ENCODE measurements at regions of chr9 and their contacts with region 1.

Region 1: GRCh38 chr9:93962561-93963440 is 7.6 kb upstream of the BARX1 start:
- DNase-seq: peak; percentile 64 to 83 (median 78)
- ATAC-seq: peak; percentile 90
- H3K4me3 ChIP-seq: no peak overlapping the region
- H3K4me3 Mint-ChIP-seq: peak overlapping the region in 6 of 10 donors; percentile 0 to 35 (median 2)
- H3K27ac ChIP-seq: no peak overlapping the region
- H3K27ac Mint-ChIP-seq: no peak overlapping the region
- H3K4me1 ChIP-seq: peaks cover 9 to 20% of the 10 kb centered on the region in 2 donors
- H3K4me1 Mint-ChIP-seq: peaks cover 26 to 44% (median 28%) of the 10 kb centered on the region in 7 donors
- H3K27me3 ChIP-seq: peaks cover 0 to 25% of the 10 kb centered on the region in 2 donors
- H3K27me3 Mint-ChIP-seq: peaks cover 45 to 67% (median 55%) of the 10 kb centered on the region in 5 donors

Region 2: GRCh38 chr9:92850884-92851283 is 1111.9 kb before region 1 on chr9:
- CTCF ChIA-PET with region 1: no interaction called
- POLR2A ChIA-PET with region 1: no interaction called
- intact Hi-C with region 1: loop called in 1 of 2 experiments (anchors 2 kb)
- DNase-seq: peak in 7 of 9 donors; percentile 22 to 46 (median 27)
- ATAC-seq: no peak
- H3K4me3 ChIP-seq: no peak overlapping the region
- H3K4me3 Mint-ChIP-seq: no peak overlapping the region
- H3K27ac ChIP-seq: no peak overlapping the region
- H3K27ac Mint-ChIP-seq: peak overlapping the region in 3 of 9 donors; percentile 8 to 84 (median 42)
- H3K4me1 ChIP-seq: peaks cover 0 to 4% of the 10 kb centered on the region in 2 donors
- H3K4me1 Mint-ChIP-seq: peaks cover 0 to 17% (median 6%) of the 10 kb centered on the region in 7 donors
- H3K27me3 ChIP-seq: no peaks in the 10 kb centered on the region
- H3K27me3 Mint-ChIP-seq: no peaks in the 10 kb centered on the region

Region 3: GRCh38 chr9:93159601-93160471 is 803.0 kb before region 1 on chr9:
- CTCF ChIA-PET with region 1: no interaction called
- POLR2A ChIA-PET with region 1: no interaction called
- intact Hi-C with region 1: loop called in 1 of 2 experiments (anchors 5 kb)
- DNase-seq: peak; percentile 35 to 82 (median 52)
- ATAC-seq: peak; percentile 95
- H3K4me3 ChIP-seq: no peak overlapping the region
- H3K4me3 Mint-ChIP-seq: peak overlapping the region in 1 of 10 donors; percentile 16
- H3K27ac ChIP-seq: no peak overlapping the region
- H3K27ac Mint-ChIP-seq: peak overlapping the region in 3 of 9 donors; percentile 40 to 72 (median 43)
- H3K4me1 ChIP-seq: peaks cover 0 to 5% of the 10 kb centered on the region in 2 donors
- H3K4me1 Mint-ChIP-seq: peaks cover 0 to 24% (median 8%) of the 10 kb centered on the region in 7 donors
- H3K27me3 ChIP-seq: no peaks in the 10 kb centered on the region
- H3K27me3 Mint-ChIP-seq: no peaks in the 10 kb centered on the region

Region 4: GRCh38 chr9:93304574-93305496 is 658.0 kb before region 1 on chr9:
- CTCF ChIA-PET with region 1: no interaction called
- POLR2A ChIA-PET with region 1: no interaction called
- intact Hi-C with region 1: no loop called
- DNase-seq: peak in 1 of 9 donors; percentile 13
- ATAC-seq: no peak
- H3K4me3 ChIP-seq: no peak overlapping the region
- H3K4me3 Mint-ChIP-seq: no peak overlapping the region
- H3K27ac ChIP-seq: no peak overlapping the region
- H3K27ac Mint-ChIP-seq: no peak overlapping the region
- H3K4me1 ChIP-seq: no peaks in the 10 kb centered on the region
- H3K4me1 Mint-ChIP-seq: peaks cover 0 to 9% (median 5%) of the 10 kb centered on the region in 7 donors
- H3K27me3 ChIP-seq: no peaks in the 10 kb centered on the region
- H3K27me3 Mint-ChIP-seq: peaks cover 0 to 3% (median 0%) of the 10 kb centered on the region in 5 donors

Region 5: DNA sequence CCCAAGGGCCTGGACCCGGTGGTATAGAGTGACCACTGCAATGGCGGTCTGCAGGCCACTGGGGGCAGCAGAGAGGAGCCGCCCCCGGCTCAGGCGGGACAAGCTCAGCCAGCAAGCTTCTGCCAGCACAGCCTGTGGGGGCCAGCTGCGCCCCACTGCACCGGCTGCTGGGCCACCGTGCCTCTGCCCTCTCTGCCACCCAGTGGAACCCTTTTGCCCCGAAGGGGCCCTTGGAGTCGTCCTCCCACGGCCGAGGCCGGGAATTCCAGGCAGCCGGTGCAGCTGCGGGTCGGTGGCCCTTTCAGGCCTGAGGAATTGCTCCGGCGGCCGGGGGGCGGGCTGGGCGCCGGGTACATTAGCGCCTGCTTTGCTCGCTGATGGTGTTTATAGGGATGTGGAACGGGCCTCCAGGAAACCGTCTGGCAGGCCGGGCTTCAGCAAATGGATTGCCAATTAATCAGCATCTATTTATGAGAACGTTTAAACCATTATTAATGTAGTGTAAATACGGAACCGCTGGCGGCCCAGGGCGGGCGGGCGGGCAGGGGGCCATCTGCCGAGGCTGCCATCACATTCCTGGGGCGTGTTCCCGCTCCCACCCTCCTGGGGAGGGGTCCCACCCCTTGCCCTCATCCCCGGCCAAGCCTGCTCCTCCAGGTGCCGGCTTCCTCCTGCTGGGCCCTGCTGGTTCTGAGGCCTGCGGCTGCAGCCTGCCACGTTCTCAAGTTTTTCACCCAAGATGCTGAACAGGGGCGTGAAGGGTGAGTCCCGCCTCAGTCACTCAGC is 135.1 kb before region 1 on chr9:
- CTCF ChIA-PET with region 1: interaction called, 10 read pairs
- POLR2A ChIA-PET with region 1: no interaction called
- intact Hi-C with region 1: loop called in 1 of 2 experiments (anchors 1 kb)
- DNase-seq: peak in 6 of 9 donors; percentile 19 to 56 (median 29)
- ATAC-seq: peak; percentile 75
- H3K4me3 ChIP-seq: no peak overlapping the region
- H3K4me3 Mint-ChIP-seq: peak overlapping the region in 2 of 10 donors; percentile 60 to 72
- H3K27ac ChIP-seq: no peak overlapping the region
- H3K27ac Mint-ChIP-seq: no peak overlapping the region
- H3K4me1 ChIP-seq: no peaks in the 10 kb centered on the region
- H3K4me1 Mint-ChIP-seq: peaks cover 3 to 15% (median 12%) of the 10 kb centered on the region in 7 donors
- H3K27me3 ChIP-seq: no peaks in the 10 kb centered on the region
- H3K27me3 Mint-ChIP-seq: peaks cover 33 to 64% (median 53%) of the 10 kb centered on the region in 5 donors